Activated B cell treated with CpG ODN at 0.5 μM for 24 hours (primary cell): ENCODE measurements at regions of chr3 and their contacts with region 1.

Region 1: DNA sequence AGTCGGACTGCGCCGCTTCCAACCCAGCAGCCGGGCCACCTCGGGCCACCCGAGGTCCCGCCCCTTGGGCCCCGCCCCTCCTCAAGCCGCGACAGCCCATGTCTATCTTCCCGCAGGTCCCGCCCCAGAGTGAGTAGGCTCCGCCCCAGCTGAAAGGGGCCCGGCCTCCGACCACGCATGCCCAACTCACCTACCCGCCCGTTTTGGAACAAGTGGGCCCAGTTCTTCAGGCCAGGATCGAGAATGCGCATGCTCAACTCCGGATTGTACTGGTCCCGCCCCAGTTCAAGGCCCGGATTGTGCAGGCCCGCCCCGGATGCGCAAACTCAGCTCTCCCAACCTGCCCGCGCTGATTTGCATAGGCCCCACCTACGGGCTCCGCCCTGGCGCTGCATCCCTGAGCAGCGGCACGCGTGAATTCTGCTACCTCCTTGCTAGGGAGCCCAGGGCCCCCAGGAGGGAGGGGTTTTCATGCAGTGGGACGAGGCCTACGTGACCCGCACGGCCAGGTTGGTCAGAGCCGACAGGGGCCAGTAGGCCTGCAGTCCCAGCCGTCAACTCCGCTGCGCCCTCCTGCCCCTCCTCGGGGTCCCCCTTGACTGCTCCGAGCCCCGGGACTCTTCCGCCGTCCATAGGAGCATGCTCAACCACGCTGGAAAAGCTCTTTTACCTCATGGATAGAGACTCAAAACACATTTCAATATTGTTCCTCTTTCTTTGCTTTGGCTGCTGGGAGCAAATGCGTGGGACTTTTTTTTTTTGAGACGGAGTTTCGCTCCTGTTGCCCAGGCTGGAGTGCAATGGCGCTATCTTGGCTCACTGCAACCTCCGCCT is at the start of gene PFKFB4:
- DNase-seq: peak; percentile 98
- ATAC-seq: peak; percentile 89
- H3K4me3 Mint-ChIP-seq: peak within 1 kb of the TSS; percentile 86
- H3K27ac Mint-ChIP-seq: peak within 1 kb of the TSS; percentile 87
- H3K4me1 Mint-ChIP-seq: peaks cover 33% of the 10 kb centered on the region
- H3K27me3 Mint-ChIP-seq: no peaks in the 10 kb centered on the region
- CTCF ChIP-seq: no peak
- total RNA-seq, gene PFKFB4: 2.0 and 3.2 TPM in 2 replicates

Region 2: DNA sequence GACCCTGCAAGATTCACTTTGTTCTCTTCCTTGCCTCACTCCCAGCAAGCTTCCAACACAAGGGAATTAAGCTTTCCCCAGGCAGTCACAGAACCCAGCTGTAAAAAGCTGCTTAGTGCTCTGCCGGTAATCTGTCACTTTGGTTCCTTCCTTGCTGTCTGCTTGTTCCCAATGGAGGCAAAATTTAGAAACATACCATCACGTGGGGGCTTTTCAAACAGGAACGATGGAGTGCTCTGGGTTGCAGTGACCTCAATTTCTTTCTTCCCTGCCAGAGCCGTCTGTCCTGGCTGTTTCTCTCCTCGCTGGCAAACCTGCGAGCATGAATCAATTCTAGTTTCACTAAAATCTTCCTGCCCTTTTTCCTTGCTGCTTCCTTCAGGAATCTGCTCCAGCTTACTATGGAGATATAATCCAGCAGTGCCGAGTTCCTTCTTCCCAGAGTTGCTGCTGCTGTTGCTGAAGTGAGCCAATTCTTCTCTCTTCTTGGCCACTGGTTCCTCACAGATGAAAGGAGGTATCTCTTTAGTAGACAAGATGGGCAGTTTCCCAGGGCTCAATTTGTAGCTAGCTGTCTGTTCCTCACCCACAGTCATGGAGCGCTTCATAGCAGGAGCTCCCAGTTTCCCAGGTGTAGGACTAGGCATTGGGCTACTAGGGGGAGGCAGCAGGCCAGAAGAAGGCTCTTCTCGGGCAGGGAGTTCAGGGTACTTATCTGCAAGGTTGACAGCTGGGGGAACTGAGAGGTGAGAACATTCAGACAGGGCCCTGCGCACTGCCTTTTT is 666.0 kb before region 1 on chr3:
- CTCF ChIA-PET with region 1: no interaction called
- POLR2A ChIA-PET with region 1: no interaction called
- intact Hi-C with region 1: no loop called
- DNase-seq: no peak
- ATAC-seq: no peak
- H3K4me3 Mint-ChIP-seq: no peak overlapping the region
- H3K27ac Mint-ChIP-seq: no peak overlapping the region
- H3K4me1 Mint-ChIP-seq: no peaks in the 10 kb centered on the region
- H3K27me3 Mint-ChIP-seq: no peaks in the 10 kb centered on the region
- CTCF ChIP-seq: no peak

Region 3: DNA sequence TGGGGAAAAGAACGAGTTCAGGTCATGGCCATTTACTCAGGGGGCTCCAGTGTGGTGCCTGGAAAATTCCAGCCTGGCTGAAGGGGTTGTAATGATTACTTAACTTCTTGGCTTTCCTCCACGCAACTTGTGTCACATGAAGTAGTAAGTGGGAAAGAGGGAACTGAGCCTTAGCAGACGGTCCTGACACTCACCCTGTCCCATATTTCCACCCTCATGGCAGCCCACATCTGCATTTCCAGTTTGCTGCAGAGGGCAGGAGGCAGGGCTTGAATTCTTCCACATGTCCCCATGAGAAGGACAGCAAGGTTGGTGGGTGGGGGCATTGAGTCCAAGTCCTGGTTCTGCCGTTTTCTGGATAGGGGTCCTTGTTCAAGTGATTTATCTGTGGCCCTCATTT is 341.5 kb before region 1 on chr3:
- CTCF ChIA-PET with region 1: no interaction called
- POLR2A ChIA-PET with region 1: no interaction called
- intact Hi-C with region 1: no loop called
- DNase-seq: no peak
- ATAC-seq: no peak
- H3K4me3 Mint-ChIP-seq: no peak overlapping the region
- H3K27ac Mint-ChIP-seq: no peak overlapping the region
- H3K4me1 Mint-ChIP-seq: no peaks in the 10 kb centered on the region
- H3K27me3 Mint-ChIP-seq: no peaks in the 10 kb centered on the region
- CTCF ChIP-seq: no peak

Region 4: DNA sequence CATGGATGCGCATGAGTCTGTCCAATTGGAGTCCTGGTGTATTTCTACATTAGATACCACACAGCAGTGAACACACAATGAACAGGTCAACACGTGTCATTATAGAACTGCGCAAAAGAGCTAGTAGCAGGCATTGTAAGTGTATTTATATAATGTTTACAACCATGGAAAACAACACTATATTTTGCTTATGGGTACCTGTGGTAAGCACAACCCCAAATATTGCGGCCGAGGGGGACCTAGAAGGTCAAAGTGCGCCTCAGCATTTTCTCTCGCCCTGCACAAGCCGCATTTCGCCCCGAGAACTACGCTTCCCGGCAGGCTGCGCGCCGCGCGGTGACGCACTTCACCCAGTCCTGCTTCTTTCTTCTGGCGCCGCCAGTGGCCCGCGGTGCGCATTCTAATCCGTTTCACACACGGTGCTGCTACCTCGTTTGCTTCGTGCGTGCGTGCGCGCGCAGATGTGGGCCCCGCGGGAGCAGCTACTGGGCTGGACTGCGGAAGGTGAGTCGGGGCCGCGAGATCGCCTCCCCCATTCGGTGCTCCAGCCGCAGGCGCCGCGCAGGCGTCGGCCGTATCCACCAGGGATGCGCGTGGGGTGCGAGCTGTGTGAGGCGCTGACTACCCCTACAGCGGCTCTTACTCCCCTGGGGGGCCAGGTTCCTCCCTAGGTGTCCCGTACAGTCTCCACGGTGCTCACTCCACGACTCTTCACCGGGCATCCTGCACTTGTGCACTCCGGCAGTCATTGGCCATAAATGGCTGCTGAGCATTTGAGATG is 316.1 kb before region 1 on chr3 and contains the start of gene ZNF589:
- CTCF ChIA-PET with region 1: no interaction called
- POLR2A ChIA-PET with region 1: interaction called, 4 read pairs
- intact Hi-C with region 1: loop called (anchors 1 kb)
- DNase-seq: peak; percentile 94
- ATAC-seq: peak; percentile 96
- H3K4me3 Mint-ChIP-seq: peak within 1 kb of the TSS; percentile 92
- H3K27ac Mint-ChIP-seq: peak within 1 kb of the TSS; percentile 94
- H3K4me1 Mint-ChIP-seq: peaks cover 17% of the 10 kb centered on the region
- H3K27me3 Mint-ChIP-seq: no peaks in the 10 kb centered on the region
- CTCF ChIP-seq: no peak
- total RNA-seq, gene ZNF589: 12.4 and 19.2 TPM in 2 replicates

Region 5: GRCh38 chr3:48439820-48440589 is 117.0 kb before region 1 on chr3 and contains the starts of genes CCDC51 and TMA7:
- CTCF ChIA-PET with region 1: interaction called, 11 read pairs
- POLR2A ChIA-PET with region 1: interaction called, 18 read pairs
- intact Hi-C with region 1: loop called (anchors 1 kb)
- DNase-seq: peak; percentile 96
- ATAC-seq: peak; percentile 95
- H3K4me3 Mint-ChIP-seq: peak within 1 kb of the TSS; percentile 98
- H3K27ac Mint-ChIP-seq: peak within 1 kb of the TSS; percentile 95
- H3K4me1 Mint-ChIP-seq: peaks cover 45% of the 10 kb centered on the region
- H3K27me3 Mint-ChIP-seq: no peaks in the 10 kb centered on the region
- CTCF ChIP-seq: no peak
- total RNA-seq, gene CCDC51: 8.7 and 8.8 TPM in 2 replicates
- total RNA-seq, gene TMA7: 216 and 296 TPM in 2 replicates

Region 6: GRCh38 chr3:48581621-48582481 is 24.8 kb after region 1 on chr3:
- CTCF ChIA-PET with region 1: no interaction called
- POLR2A ChIA-PET with region 1: no interaction called
- intact Hi-C with region 1: no loop called
- DNase-seq: no peak
- ATAC-seq: no peak
- H3K4me3 Mint-ChIP-seq: no peak overlapping the region
- H3K27ac Mint-ChIP-seq: no peak overlapping the region
- H3K4me1 Mint-ChIP-seq: no peaks in the 10 kb centered on the region
- H3K27me3 Mint-ChIP-seq: peaks cover 3% of the 10 kb centered on the region
- CTCF ChIP-seq: no peak

Region 7: GRCh38 chr3:48609088-48610005 is 52.3 kb after region 1 on chr3 and contains the start of gene UQCRC1:
- CTCF ChIA-PET with region 1: no interaction called
- POLR2A ChIA-PET with region 1: interaction called, 3 read pairs
- intact Hi-C with region 1: loop called (anchors 1 kb)
- DNase-seq: peak; percentile 89
- ATAC-seq: peak; percentile 99
- H3K4me3 Mint-ChIP-seq: peak within 1 kb of the TSS; percentile 98
- H3K27ac Mint-ChIP-seq: peak within 1 kb of the TSS; percentile 93
- H3K4me1 Mint-ChIP-seq: peaks cover 18% of the 10 kb centered on the region
- H3K27me3 Mint-ChIP-seq: no peaks in the 10 kb centered on the region
- CTCF ChIP-seq: no peak
- total RNA-seq, gene UQCRC1: 117 and 118 TPM in 2 replicates

Region 8: GRCh38 chr3:48685602-48686511 is 128.8 kb after region 1 on chr3 and contains the start of gene NCKIPSD:
- CTCF ChIA-PET with region 1: no interaction called
- POLR2A ChIA-PET with region 1: no interaction called
- intact Hi-C with region 1: loop called (anchors 1 kb)
- DNase-seq: peak; percentile 94
- ATAC-seq: peak; percentile 92
- H3K4me3 Mint-ChIP-seq: peak within 1 kb of the TSS; percentile 90
- H3K27ac Mint-ChIP-seq: peak within 1 kb of the TSS; percentile 86
- H3K4me1 Mint-ChIP-seq: peaks cover 30% of the 10 kb centered on the region
- H3K27me3 Mint-ChIP-seq: no peaks in the 10 kb centered on the region
- CTCF ChIP-seq: peak; percentile 24
- total RNA-seq, gene NCKIPSD: 9.2 and 9.7 TPM in 2 replicates

Region 9: DNA sequence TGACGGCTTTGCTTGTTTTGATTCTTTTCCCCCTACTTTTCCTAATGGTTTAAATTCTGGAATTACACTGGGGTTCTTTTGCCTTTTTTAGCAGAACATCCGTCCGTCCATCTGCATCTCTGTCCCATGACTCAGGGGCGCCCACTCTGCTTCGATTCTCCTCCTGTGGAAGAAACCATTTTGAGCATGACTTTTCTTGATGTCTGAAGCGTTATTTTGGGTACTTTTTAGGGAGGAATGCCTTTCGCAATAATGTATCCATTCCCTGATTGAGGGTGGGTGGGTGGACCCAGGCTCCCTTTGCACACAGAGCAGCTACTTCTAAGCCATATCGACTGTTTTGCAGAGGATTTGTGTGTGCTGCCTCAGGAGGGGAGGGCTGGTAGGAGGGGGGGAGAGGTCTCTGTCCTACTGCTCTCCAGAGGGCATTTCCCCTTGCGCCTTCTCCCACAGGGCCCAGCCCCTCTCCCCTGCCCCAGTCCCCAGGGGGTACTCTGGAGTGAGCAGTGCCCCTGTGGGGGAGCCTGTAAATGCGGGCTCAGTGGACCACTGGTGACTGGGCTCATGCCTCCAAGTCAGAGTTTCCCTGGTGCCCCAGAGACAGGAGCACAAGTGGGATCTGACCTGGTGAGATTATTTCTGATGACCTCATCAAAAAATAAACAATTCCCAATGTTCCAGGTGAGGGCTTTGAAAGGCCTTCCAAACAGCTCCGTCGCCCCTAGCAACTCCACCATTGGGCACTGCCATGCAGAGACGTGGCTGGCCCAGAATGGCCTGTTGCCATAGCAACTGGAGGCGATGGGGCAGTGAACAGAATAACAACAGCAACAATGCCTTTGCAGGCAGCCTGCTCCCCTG is 977.8 kb after region 1 on chr3:
- CTCF ChIA-PET with region 1: no interaction called
- POLR2A ChIA-PET with region 1: no interaction called
- intact Hi-C with region 1: no loop called
- DNase-seq: no peak
- ATAC-seq: no peak
- H3K4me3 Mint-ChIP-seq: no peak overlapping the region
- H3K27ac Mint-ChIP-seq: no peak overlapping the region
- H3K4me1 Mint-ChIP-seq: peaks cover 3% of the 10 kb centered on the region
- H3K27me3 Mint-ChIP-seq: no peaks in the 10 kb centered on the region
- CTCF ChIP-seq: no peak

Region 10: GRCh38 chr3:49673715-49674496 is 1116.9 kb after region 1 on chr3 and contains the start of gene APEH:
- CTCF ChIA-PET with region 1: no interaction called
- POLR2A ChIA-PET with region 1: no interaction called
- intact Hi-C with region 1: loop called (anchors 2 kb)
- DNase-seq: peak; percentile 98
- ATAC-seq: peak; percentile 88
- H3K4me3 Mint-ChIP-seq: peak within 1 kb of the TSS; percentile 91
- H3K27ac Mint-ChIP-seq: peak within 1 kb of the TSS; percentile 98
- H3K4me1 Mint-ChIP-seq: peaks cover 22% of the 10 kb centered on the region
- H3K27me3 Mint-ChIP-seq: no peaks in the 10 kb centered on the region
- CTCF ChIP-seq: no peak
- total RNA-seq, gene APEH: 109 and 113 TPM in 2 replicates

Region 11: DNA sequence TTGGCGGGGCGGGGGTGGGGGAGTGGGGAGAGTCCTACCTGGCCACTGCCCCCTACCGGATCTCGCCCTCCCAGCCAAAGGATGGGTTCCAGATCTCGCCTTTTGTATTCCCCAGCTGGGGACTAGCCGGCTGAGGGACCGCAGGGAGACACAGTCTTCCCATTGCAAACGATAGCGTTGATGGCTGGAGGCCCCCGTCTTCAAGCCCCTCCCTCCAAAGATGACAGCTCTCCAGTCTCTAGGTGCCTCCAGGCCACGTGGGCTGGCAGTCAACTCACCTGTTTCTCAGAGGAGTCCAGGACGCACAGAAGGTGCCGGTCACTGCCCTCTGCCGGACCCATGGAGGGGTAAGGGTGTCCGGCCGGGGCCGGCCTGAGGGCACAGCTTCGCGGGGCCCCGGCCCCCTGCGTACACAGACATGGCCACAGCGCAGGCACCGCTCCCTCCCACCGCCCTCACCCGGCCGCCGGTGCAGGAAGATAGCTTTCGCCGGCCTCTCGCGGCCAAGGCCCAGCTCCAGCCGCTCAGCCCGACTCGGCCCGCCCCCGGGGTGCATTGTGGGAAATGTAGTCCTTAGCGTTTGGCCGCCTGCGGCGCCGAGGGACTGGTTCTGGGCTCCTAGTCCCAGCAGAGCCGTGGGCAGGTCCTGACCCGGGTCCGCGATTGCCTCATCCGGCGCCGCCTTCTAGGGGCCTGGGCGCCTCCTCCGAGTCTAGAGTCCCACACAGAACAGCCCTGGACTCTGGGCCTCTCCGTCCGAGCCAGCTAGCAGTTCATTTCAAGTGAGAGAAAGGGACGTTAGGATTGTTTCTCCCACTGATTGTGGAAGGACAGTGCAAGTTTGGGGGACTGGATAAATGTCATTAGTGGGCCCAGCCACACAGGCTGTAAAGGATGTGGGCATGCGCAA is 1372.6 kb after region 1 on chr3 and contains the start of gene MON1A:
- CTCF ChIA-PET with region 1: no interaction called
- POLR2A ChIA-PET with region 1: no interaction called
- intact Hi-C with region 1: loop called (anchors 2 kb)
- DNase-seq: peak; percentile 92
- ATAC-seq: peak; percentile 95
- H3K4me3 Mint-ChIP-seq: peak within 1 kb of the TSS; percentile 86
- H3K27ac Mint-ChIP-seq: peak within 1 kb of the TSS; percentile 79
- H3K4me1 Mint-ChIP-seq: peaks cover 16% of the 10 kb centered on the region
- H3K27me3 Mint-ChIP-seq: no peaks in the 10 kb centered on the region
- CTCF ChIP-seq: no peak
- total RNA-seq, gene MON1A: 6.3 and 7.1 TPM in 2 replicates